ENCODE measurements at regions of chr17 and their contacts with region 1.

Region 1: DNA sequence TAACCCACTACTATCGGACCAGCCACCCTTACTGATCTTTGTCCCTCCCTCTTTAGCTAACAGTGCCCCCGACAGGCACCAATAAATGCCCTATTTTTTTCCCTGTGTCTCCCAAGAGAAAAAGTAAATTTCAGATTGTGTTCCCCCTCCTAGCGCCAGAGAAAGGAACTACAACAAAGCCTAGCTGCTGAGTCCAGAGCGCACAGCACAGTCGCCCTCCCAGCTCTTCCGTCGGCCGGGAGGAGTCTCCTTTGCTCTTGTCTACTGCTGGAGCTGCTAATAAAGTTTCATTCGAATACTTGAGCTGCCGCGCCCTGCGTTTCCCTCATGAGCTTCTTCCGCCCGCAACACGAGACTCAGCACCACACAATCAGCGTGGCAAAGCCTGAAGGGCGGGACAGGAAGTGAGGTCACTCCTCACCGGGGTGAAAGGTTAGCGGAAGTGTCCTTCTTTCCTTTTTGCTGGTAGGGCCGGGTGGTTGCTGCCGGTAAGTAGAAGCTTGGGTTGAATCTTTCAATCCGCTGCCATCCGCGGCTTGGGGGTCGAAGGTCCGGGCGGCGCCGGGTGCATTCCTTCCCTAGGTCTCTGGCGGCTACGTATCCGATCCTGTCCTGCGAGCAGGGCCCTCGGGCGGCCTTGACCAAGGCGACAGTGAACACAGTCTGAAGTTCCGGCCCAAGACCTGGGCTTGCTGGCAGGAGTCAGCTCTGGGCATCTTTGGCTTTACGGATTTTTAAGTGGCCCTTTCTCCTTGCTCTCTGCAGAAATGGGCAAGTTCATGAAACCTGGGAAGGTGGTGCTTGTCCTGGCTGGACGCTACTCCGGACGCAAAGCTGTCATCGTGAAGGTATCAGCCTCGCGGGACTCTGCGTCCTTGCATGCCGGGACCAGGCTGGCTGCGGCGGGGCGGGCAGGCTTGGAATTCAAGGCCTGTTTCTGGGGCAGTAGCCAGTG is at the start of gene RPL27:
- DNase-seq: peak; percentile 97 to 100 (median 99)

Region 2: DNA sequence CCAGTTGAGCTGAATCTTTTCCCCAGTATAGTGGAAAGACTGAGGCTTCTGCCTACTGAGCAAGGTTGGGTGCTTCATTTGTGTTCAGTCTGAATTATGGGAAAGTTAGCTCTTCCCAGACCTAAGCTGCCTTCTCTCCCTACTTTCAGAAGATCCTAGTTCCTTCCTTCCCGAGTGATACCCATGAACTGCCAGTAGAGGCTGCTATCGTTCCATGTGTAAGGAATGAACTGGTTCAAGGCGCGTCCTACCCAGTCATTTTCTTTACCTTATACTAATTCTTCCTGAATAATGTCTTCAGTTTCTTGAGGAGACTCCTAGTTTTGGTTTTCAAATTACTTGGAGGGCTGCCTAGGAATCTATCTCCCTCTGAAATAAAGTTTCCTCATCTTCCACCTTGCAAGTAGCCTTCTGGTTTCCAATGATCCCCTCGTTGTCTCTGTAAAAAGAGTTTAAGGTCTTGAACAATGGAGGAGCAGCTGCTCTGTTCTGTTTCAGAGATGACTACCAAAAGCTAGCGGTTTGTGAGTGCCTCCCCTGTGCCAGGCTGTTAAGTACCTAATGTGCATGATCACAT is 154.8 kb before region 1 on chr17:
- intact Hi-C with region 1: loop called (anchors 5 kb)
- DNase-seq: peak in 2 of 10 donors; percentile 26 to 45

Region 3: DNA sequence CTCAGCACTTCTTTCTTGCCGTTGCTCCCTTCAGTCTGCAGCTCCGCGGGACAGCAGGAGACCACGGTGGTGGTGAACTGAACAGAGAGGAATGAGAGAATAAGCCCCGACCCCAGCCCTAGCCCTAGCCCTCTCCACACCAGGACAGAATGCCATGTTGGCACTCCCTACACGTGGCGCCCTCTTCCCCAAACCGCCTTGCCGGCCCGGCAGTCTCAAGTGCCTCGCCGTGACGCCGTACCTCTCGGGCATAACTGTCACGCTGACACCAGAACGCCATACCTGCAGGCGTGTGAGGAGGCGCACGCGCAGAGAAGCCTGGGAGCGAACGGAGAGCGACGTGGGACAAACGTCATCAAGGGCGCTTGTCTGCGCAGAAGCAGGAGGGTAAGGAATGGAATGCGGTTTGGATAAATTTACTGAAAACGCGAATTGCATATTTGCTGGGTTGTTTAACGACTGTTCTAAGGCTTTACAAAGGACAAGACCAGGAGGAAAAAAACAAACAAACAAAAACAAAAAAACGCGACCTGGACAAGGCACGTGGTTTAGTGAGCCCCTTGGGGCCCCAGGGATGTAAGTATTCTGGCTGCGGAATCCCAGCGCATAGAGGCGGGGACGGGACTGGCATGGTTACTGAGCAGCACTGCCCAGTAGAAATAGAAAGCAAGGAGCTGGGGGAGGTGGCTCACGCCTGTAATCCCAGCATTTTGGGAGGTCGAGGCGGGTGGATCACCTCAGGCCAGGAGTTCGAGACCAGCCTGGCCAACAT is 33.9 kb before region 1 on chr17 and contains the start of gene AARSD1:
- intact Hi-C with region 1: loop called (anchors 1 kb)
- DNase-seq: peak; percentile 84 to 98 (median 88)

Measured in posterior cingulate gyrus (tissue), 11 donors.